Psoas muscle (tissue), 8 donors: ENCODE measurements at regions of chr1 and their contacts with region 1.

Region 1: DNA sequence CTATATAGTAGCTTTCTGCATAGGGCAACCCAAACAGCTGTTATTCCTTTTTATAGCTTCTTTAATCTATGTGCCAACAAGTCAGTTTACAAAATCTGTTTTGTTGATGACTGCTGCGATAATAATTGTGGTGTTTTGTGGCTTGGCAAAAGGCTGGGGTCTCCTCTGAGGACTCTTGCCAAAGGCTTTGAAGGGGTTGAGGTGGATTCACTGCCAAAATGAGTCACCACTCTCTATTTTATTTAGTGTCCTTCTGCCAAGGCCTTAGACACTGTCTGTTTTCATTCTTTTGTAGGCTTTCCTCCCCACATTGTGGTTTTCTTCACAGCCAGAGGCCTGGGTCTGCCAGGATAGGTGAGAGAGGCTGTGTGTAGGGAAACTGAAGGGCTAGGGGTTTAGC is 161.8 kb downstream of the NFIA start:
- DNase-seq: no peak
- ATAC-seq: peak; percentile 42 to 55 (median 44)
- H3K4me3 ChIP-seq: no peak overlapping the region
- H3K27ac ChIP-seq: peak overlapping the region; percentile 93
- H3K4me1 ChIP-seq: peaks cover 66% of the 10 kb centered on the region
- H3K27me3 ChIP-seq: no peaks in the 10 kb centered on the region
- CTCF ChIP-seq: no peak

Region 2: GRCh38 chr1:61182049-61182448 is 62.1 kb before region 1 on chr1:
- intact Hi-C with region 1: no loop called
- DNase-seq: no peak
- ATAC-seq: peak; percentile 67 to 81 (median 74)
- H3K4me3 ChIP-seq: peak overlapping the region; percentile 0
- H3K27ac ChIP-seq: peak overlapping the region; percentile 94
- H3K4me1 ChIP-seq: peaks cover 72% of the 10 kb centered on the region
- H3K27me3 ChIP-seq: no peaks in the 10 kb centered on the region
- CTCF ChIP-seq: no peak

Region 3: DNA sequence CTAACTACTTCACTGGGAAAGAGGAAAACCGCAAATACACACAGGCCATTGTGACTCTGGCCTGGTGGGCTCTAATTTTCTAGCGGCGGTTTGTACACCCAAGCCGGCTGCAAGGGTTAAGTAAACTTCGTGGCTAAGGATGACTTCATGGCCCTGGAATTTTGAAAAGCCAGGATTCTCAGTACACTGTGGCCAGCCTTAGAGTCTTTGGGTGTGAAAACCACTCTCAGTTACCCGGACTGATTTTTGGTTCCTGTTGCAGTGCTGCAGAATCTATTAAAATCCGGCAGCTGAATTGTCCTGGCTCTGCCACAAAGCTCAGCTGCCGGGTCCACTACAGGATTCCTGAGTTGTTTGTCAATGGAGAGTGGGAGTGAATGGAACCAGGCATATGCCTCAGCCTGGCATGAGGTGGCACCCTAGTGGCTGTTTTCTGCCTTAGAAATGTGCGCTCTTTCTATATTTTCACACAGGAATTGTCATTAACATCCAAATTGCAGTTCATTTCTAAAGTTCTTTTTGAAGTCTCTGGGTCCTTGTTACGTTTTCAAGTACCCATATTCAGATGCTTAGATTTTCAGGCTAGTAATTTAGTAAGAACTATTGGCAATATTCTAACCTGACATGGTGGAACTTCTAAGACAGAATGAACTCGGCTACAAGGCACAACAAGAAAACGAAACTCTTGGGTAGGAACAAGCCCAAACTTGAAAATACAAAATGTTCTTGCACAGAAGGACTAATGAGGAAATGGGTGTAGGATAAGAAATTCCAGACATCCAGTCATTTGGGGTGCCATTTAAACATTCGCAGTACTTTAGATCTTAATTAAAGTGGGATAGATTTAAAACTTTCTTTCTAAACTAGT is 94.1 kb after region 1 on chr1:
- intact Hi-C with region 1: loop called in 1 of 2 experiments (anchors 5 kb)
- DNase-seq: peak; percentile 71 to 84
- ATAC-seq: peak; percentile 88 to 92 (median 92)
- H3K4me3 ChIP-seq: peak overlapping the region; percentile 53
- H3K27ac ChIP-seq: peak overlapping the region; percentile 87
- H3K4me1 ChIP-seq: peaks cover 33% of the 10 kb centered on the region
- H3K27me3 ChIP-seq: no peaks in the 10 kb centered on the region
- CTCF ChIP-seq: peak; percentile 72

Region 4: GRCh38 chr1:61397935-61398334 is 153.8 kb after region 1 on chr1:
- intact Hi-C with region 1: no loop called
- DNase-seq: no peak
- ATAC-seq: peak; percentile 83 to 96 (median 90)
- H3K4me3 ChIP-seq: peak overlapping the region; percentile 16
- H3K27ac ChIP-seq: peak overlapping the region; percentile 80
- H3K4me1 ChIP-seq: peaks cover 36% of the 10 kb centered on the region
- H3K27me3 ChIP-seq: no peaks in the 10 kb centered on the region
- CTCF ChIP-seq: no peak